Dendritic cell treated with granulocyte-macrophage colony-stimulating factor and Interleukin-4, amounts not matched to agents 40 ng/mL and 50 ng/mL, for 4 days (primary cell): ENCODE measurements at regions of chr7 and their contacts with region 1.

Region 1: GRCh38 chr7:4610768-4611467 is 71.2 kb upstream of the FOXK1 start:
- H3K4me3 Mint-ChIP-seq: no peak overlapping the region
- H3K27ac Mint-ChIP-seq: no peak overlapping the region
- H3K4me1 Mint-ChIP-seq: peaks cover 25% of the 10 kb centered on the region
- H3K27me3 Mint-ChIP-seq: peaks cover 1% of the 10 kb centered on the region

Region 2: DNA sequence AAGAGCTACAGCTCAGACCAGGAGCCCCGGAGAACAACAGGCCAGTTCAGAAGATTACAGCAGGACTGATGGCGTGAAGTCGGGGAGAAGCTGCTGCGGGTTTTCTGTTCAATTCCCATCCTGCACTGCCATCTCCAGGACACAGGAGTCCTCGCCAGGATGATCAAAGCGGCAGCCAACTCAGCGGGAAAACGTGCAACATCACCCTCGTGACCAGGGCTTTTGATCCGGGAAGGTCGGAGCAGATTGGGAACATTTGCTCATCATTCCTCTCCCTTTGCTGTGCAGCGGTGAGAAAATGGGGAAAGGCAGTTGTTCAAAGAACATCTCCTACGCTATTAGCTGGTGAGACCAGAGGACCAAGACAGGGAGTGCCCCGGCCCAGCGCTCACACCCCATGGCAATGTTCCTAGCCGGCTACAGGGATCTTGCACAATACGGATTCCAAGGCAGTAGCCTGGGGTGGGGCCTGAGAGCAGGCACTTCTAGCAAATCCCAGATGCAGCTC is 20.8 kb after region 1 on chr7:
- intact Hi-C with region 1: loop called (anchors 1 kb)
- H3K4me3 Mint-ChIP-seq: peak overlapping the region; percentile 28
- H3K27ac Mint-ChIP-seq: peak overlapping the region; percentile 2
- H3K4me1 Mint-ChIP-seq: peaks cover 18% of the 10 kb centered on the region
- H3K27me3 Mint-ChIP-seq: peaks cover 12% of the 10 kb centered on the region

Region 3: DNA sequence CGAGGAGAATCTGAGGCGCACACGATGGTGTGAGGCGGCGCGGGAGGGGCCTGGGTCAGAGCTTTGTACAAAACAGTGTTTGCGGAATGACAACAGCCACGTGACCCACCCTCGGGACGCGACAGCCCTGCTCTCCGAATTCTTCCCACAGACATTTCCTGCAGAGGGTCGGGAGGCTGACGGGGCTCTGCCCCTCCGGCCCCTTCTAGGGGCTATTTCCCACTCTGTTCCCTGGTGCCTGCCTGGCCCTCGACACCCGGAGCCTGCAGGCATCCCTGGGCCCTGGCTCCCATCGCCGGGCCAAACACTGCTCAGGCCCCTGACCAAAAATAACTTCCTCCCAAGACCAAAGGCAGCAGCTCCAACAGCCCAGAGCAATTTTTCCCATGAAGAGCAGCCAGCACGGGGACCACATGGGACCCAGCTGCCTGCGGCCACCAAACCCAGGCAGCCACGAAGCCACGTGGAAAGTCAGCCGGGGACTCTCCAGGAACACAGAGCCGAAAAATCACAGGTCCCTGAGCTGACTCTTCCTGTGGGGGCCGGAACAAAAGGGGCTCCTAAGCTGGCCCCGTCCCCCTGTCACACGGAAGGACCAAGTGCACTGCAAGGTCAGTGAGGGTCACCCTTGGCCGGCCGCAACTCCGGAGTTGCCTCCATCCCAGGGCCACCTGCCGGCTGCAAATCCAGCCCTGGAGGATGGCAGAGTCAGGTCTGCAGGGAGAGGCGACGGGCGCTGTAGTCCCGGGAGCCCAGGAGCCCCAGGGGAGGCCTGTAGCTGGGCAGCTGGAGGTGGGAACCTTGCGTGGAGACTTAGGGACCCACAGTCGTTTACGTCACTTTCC is 208.9 kb after region 1 on chr7:
- intact Hi-C with region 1: no loop called
- H3K4me3 Mint-ChIP-seq: no peak overlapping the region
- H3K27ac Mint-ChIP-seq: no peak overlapping the region
- H3K4me1 Mint-ChIP-seq: peaks cover 1% of the 10 kb centered on the region
- H3K27me3 Mint-ChIP-seq: peaks cover 8% of the 10 kb centered on the region